ENCODE measurements at regions of chr16 and their contacts with region 1.

Region 1: GRCh38 chr16:49350265-49351095 is 23.1 kb upstream of the C16orf78 start:
- DNase-seq: no peak
- H3K4me3 ChIP-seq: no peak overlapping the region
- H3K27ac ChIP-seq: no peak overlapping the region
- H3K4me1 ChIP-seq: no peaks in the 10 kb centered on the region
- H3K27me3 ChIP-seq: peaks cover 0 to 63% (median 0%) of the 10 kb centered on the region in 4 donors
- CTCF ChIP-seq: peak; percentile 57 to 74 (median 68)
- POLR2A ChIP-seq: no peak

Region 2: DNA sequence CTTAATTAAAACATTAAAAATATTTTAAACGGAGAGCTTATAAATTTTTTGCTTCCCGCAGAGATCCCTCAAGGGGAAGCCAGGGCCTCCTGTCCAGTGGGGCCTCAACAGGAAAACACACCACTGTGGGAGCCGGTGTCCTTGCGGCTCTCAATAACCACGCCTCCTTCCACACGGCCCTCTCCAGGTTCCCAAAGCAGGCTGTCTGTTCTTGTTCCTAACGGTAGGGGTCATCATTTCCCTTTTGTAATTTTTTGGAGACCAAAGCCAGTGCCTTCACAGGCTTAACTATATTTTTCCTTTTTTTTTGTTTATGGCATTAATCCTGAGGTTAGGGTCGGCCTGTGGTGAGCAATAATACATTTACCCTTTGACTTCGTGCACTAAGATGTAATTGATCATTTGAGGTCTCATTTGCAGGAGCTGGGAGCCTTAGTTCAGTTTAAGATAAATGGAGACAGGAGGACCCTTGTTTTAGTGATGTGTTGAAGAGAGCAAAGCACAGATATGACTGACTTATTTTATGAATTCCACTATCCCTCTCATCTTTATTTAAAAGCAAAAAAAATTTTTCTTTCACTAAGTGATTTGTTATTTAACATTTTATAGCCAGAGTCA is 663.0 kb before region 1 on chr16:
- intact Hi-C with region 1: loop called (anchors 5 kb)
- DNase-seq: no peak
- H3K4me3 ChIP-seq: no peak overlapping the region
- H3K27ac ChIP-seq: no peak overlapping the region
- H3K4me1 ChIP-seq: no peaks in the 10 kb centered on the region
- H3K27me3 ChIP-seq: peaks cover 0 to 7% (median 0%) of the 10 kb centered on the region in 4 donors
- CTCF ChIP-seq: peak in 5 of 6 experiments; percentile 40 to 64 (median 58)
- POLR2A ChIP-seq: no peak

Region 3: DNA sequence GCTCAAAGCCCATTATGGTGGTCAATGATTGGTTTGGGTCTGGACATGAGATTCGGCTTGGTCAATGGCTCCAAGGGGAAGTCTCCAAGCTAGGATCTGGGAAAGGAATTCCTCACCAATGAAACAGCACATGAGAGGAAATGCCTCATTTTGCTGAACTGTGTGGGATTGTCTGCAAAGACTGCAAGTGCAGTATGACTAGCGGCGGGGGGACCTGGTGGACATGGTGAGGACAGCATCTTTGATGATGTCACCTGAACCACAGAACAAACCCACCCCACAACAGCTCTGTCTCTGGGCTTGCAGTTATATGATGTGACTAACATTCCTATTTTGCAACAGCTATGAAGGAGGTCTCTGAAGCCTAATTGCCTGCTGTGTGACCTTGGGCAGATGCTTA is 1147.1 kb after region 1 on chr16:
- intact Hi-C with region 1: no loop called
- DNase-seq: no peak
- H3K4me3 ChIP-seq: no peak overlapping the region
- H3K27ac ChIP-seq: no peak overlapping the region
- H3K4me1 ChIP-seq: no peaks in the 10 kb centered on the region
- H3K27me3 ChIP-seq: peaks cover 0 to 9% (median 0%) of the 10 kb centered on the region in 4 donors
- CTCF ChIP-seq: no peak
- POLR2A ChIP-seq: no peak